Uterus (tissue), 4 donors: ENCODE measurements at regions of chr1 and their contacts with region 1.

Region 1: DNA sequence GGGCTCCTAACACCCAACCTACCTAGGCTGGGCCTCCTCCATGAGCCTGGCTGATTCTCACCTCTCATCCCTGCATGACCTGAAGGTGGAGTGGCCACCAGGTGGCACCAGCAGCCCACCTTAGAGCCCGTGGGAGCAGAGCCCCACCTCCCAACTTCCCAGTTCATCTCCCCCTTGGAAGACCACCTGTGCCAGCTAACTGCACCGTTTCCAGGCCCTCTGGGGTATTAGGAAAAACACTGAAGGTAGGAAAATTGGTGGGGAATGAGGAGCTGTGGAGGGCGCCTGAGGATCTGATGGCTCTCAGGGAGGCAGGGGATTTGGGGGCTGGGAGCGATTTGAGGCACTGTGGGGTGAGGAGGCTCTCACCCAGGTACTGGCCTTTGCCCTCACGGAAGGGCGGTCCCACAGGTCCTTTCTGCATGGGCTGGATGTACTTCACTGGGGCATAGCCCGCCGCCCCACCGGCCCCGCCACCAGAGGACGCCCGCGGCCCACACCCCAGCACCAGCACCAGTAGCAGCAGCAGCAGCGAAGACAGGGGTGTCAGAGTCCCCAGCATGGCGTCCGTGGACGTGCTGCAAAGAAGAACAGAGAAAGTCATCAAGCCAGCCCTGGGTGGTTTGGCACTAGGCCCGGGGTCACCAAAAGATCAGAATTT is 11.1 kb downstream of the ADPRS start:
- DNase-seq: peak; percentile 73 to 78
- H3K4me3 ChIP-seq: no peak overlapping the region
- H3K27ac ChIP-seq: no peak overlapping the region
- H3K4me1 ChIP-seq: no peaks in the 10 kb centered on the region
- H3K27me3 ChIP-seq: no peaks in the 10 kb centered on the region
- CTCF ChIP-seq: peak; percentile 81 to 91 (median 86)
- POLR2A ChIP-seq: peak in 1 of 2 donors; percentile 19

Region 2: GRCh38 chr1:36055706-36056105 is 44.1 kb before region 1 on chr1:
- intact Hi-C with region 1: no loop called
- DNase-seq: no peak
- H3K4me3 ChIP-seq: no peak overlapping the region
- H3K27ac ChIP-seq: no peak overlapping the region
- H3K4me1 ChIP-seq: no peaks in the 10 kb centered on the region
- H3K27me3 ChIP-seq: no peaks in the 10 kb centered on the region
- CTCF ChIP-seq: no peak
- POLR2A ChIP-seq: no peak

Region 3: DNA sequence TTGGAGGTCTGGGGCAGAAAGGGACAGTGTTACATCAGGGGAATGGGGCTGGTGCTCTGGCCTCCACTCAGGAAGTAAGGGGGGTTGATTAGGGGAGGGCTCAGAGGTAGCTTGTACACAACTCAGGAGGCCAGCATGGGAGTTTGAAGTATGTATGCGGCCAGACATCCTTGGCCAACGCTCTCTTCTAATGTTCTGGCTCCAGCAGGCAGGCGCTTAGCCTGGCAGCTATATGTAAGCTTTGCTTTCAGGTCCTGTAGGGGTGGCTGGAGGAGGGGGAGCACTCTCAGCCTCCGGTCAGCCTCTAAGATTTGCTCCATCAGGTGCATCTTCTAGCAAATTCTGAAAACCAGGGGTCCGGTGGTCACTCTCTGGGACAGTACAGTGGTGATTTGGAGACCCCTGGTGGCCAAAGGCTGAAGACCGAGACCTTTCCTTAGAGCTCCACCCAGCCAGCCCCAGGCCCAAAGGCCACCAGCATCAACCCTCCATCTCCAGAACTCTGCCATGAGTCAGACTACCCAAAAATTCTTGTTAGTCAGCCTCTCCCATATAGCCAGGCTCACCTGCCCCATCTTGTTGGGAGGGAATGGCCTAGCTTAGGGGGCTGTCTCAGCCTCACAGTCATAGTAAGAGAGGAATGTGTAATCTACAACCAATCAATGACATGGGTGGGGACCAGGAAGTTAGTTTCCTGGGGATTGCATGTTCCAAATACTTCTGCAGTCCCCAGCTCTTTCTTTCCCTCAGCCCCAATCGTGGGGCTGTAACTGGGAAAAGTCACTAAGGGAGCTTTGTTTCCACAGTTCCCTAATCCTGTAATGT is 34.9 kb after region 1 on chr1:
- intact Hi-C with region 1: loop called (anchors 2 kb)
- DNase-seq: peak; percentile 47 to 61
- H3K4me3 ChIP-seq: no peak overlapping the region
- H3K27ac ChIP-seq: peak overlapping the region; percentile 29 to 54
- H3K4me1 ChIP-seq: no peaks in the 10 kb centered on the region
- H3K27me3 ChIP-seq: no peaks in the 10 kb centered on the region
- CTCF ChIP-seq: peak; percentile 48 to 68 (median 54)
- POLR2A ChIP-seq: no peak

Region 4: GRCh38 chr1:36187800-36188593 is 88.2 kb after region 1 on chr1:
- intact Hi-C with region 1: loop called (anchors 10 kb)
- DNase-seq: peak; percentile 82 to 88
- H3K4me3 ChIP-seq: no peak overlapping the region
- H3K27ac ChIP-seq: peak overlapping the region; percentile 74 to 91
- H3K4me1 ChIP-seq: peaks cover 0 to 3% of the 10 kb centered on the region in 2 donors
- H3K27me3 ChIP-seq: no peaks in the 10 kb centered on the region
- CTCF ChIP-seq: peak; percentile 80 to 97 (median 91)
- POLR2A ChIP-seq: peak; percentile 5 to 14